IMR-90 (cell line): ENCODE measurements at regions of chr9 and their contacts with region 1.

Region 1: GRCh38 chr9:125407974-125408900 is 146.6 kb downstream of the GAPVD1 start:
- DNase-seq: peak; percentile 56
- ATAC-seq: peak; percentile 93
- H3K4me3 ChIP-seq: peak overlapping the region; percentile 82
- H3K27ac ChIP-seq: peak overlapping the region; percentile 69
- H3K4me1 ChIP-seq: peaks cover 3% of the 10 kb centered on the region; the same call in 1 of the 2 replicates
- H3K27me3 ChIP-seq: no peaks in the 10 kb centered on the region
- CTCF ChIP-seq: peak; percentile 95
- POLR2A ChIP-seq: 0 out of 2 replicates have a peak, but pooled peaks have one; percentile 51
- RAD21 ChIP-seq: peak; percentile 96

Region 2: GRCh38 chr9:125513668-125514413 is 105.6 kb after region 1 on chr9:
- CTCF ChIA-PET with region 1: no interaction called
- POLR2A ChIA-PET with region 1: no interaction called
- dilution Hi-C with region 1: no loop called
- in situ Hi-C with region 1: no loop called
- intact Hi-C with region 1: no loop called
- DNase-seq: peak; percentile 81
- ATAC-seq: peak; percentile 85
- H3K4me3 ChIP-seq: peak overlapping the region; percentile 19; the same call in 1 of the 2 replicates
- H3K27ac ChIP-seq: peak overlapping the region; percentile 68
- H3K4me1 ChIP-seq: peaks cover 18% of the 10 kb centered on the region
- H3K27me3 ChIP-seq: no peaks in the 10 kb centered on the region
- CTCF ChIP-seq: no peak
- POLR2A ChIP-seq: no peak
- RAD21 ChIP-seq: no peak

Region 3: DNA sequence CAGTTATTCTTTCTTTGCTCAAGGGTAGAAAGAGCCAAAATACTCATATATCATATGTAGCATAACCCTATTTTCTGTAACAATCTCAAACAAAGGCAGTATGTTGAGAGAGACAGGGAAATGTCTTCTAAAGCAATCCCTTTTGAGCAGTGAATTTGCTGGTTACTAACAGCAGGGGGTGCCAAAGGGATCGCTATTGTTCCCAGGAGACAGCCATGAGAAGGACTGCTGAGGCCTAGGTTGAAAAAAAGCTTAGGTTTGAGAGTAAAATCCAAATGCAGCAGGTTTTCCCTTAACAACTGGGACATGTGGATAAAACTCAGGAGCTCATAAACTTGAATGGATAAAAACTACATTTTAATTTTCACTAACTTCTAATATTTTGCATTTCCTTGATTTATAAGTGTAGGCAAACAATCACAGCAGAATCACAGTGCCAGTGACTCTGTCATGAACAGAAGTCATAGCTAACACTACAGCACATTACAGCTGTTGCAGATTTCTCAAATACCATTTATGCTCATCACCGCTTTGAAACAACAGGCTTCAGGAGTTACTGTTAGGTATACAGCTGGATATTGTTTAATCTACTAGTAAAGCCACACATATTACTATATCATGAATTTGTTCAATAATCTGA is 150.3 kb after region 1 on chr9:
- CTCF ChIA-PET with region 1: interaction called, 3 read pairs
- POLR2A ChIA-PET with region 1: no interaction called
- dilution Hi-C with region 1: no loop called
- in situ Hi-C with region 1: no loop called
- intact Hi-C with region 1: loop called (anchors 2 kb)
- DNase-seq: peak; percentile 83
- ATAC-seq: peak; percentile 88
- H3K4me3 ChIP-seq: no peak overlapping the region
- H3K27ac ChIP-seq: no peak overlapping the region; the same call in 1 of the 2 replicates
- H3K4me1 ChIP-seq: peaks cover 3% of the 10 kb centered on the region
- H3K27me3 ChIP-seq: no peaks in the 10 kb centered on the region
- CTCF ChIP-seq: peak; percentile 77
- POLR2A ChIP-seq: no peak
- RAD21 ChIP-seq: peak; percentile 85

Region 4: GRCh38 chr9:125631391-125632085 is 223.3 kb after region 1 on chr9:
- CTCF ChIA-PET with region 1: interaction called, 3 read pairs
- POLR2A ChIA-PET with region 1: no interaction called
- dilution Hi-C with region 1: no loop called
- in situ Hi-C with region 1: loop called (anchors 10 kb)
- intact Hi-C with region 1: loop called (anchors 1 kb)
- DNase-seq: peak; percentile 57
- ATAC-seq: peak; percentile 85
- H3K4me3 ChIP-seq: no peak overlapping the region
- H3K27ac ChIP-seq: no peak overlapping the region
- H3K4me1 ChIP-seq: peaks cover 7% of the 10 kb centered on the region
- H3K27me3 ChIP-seq: no peaks in the 10 kb centered on the region
- CTCF ChIP-seq: peak; percentile 64
- POLR2A ChIP-seq: no peak
- RAD21 ChIP-seq: peak; percentile 80

Region 5: GRCh38 chr9:125706661-125707471 is 298.6 kb after region 1 on chr9 and contains the start of gene MAPKAP1:
- CTCF ChIA-PET with region 1: no interaction called
- POLR2A ChIA-PET with region 1: no interaction called
- dilution Hi-C with region 1: no loop called
- in situ Hi-C with region 1: no loop called
- intact Hi-C with region 1: loop called (anchors 5 kb)
- DNase-seq: peak; percentile 95
- ATAC-seq: peak; percentile 99
- H3K4me3 ChIP-seq: peak within 1 kb of the TSS; percentile 67
- H3K27ac ChIP-seq: peak within 1 kb of the TSS; percentile 88
- H3K4me1 ChIP-seq: peaks cover 5% of the 10 kb centered on the region
- H3K27me3 ChIP-seq: no peaks in the 10 kb centered on the region
- CTCF ChIP-seq: no peak
- POLR2A ChIP-seq: peak; percentile 84
- RAD21 ChIP-seq: peak; percentile 26; the same call in 1 of the 2 replicates
- total RNA-seq, gene MAPKAP1: 122 and 158 TPM in 2 replicates

Region 6: GRCh38 chr9:126228781-126229444 is 820.7 kb after region 1 on chr9:
- CTCF ChIA-PET with region 1: no interaction called
- POLR2A ChIA-PET with region 1: no interaction called
- dilution Hi-C with region 1: no loop called
- in situ Hi-C with region 1: loop called (anchors 5 kb)
- intact Hi-C with region 1: loop called (anchors 1 kb)
- DNase-seq: peak; percentile 57
- ATAC-seq: peak; percentile 100
- H3K4me3 ChIP-seq: no peak overlapping the region
- H3K27ac ChIP-seq: no peak overlapping the region
- H3K4me1 ChIP-seq: no peaks in the 10 kb centered on the region
- H3K27me3 ChIP-seq: peaks cover 58% of the 10 kb centered on the region
- CTCF ChIP-seq: peak; percentile 88
- POLR2A ChIP-seq: no peak
- RAD21 ChIP-seq: peak; percentile 91

Region 7: GRCh38 chr9:126398403-126399058 is 990.3 kb after region 1 on chr9:
- CTCF ChIA-PET with region 1: interaction called, 6 read pairs
- POLR2A ChIA-PET with region 1: no interaction called
- dilution Hi-C with region 1: no loop called
- in situ Hi-C with region 1: loop called (anchors 10 kb)
- intact Hi-C with region 1: loop called (anchors 5 kb)
- DNase-seq: peak; percentile 52
- ATAC-seq: peak; percentile 91
- H3K4me3 ChIP-seq: no peak overlapping the region
- H3K27ac ChIP-seq: no peak overlapping the region
- H3K4me1 ChIP-seq: peaks cover 8% of the 10 kb centered on the region
- H3K27me3 ChIP-seq: no peaks in the 10 kb centered on the region
- CTCF ChIP-seq: peak; percentile 97
- POLR2A ChIP-seq: no peak
- RAD21 ChIP-seq: peak; percentile 97

Region 8: DNA sequence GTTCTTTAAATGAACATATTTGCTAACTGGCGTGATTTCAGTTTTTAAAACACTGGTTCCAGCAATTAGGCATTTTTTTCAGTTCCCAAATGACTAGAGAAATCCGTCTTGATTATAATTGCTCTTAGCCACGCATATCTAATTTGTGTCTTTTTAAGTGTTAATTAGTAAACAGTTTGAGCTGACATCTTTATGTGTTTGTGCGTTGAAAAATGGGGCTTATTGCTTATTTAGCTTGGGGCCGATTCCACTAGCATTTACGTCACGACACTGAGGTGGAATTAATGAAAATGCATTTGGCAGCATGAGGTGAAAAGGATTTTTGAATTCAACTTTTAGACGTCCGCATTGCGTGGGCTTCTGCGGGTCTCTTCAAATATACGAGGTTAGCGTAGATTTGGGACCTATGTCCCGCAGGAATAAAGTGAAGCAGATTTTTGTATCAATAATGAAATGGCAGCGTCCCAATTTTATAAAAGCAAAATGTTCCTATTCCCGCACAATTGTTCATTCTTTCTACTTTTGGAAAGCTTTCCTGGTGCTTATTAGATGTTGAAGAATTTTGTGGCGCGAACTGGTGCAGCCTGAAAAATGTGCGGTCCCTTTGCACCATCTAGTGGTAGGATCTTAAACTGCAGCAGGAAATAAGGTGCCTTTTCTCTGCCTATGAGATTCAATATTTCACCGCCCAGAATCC is 1082.8 kb after region 1 on chr9:
- CTCF ChIA-PET with region 1: no interaction called
- POLR2A ChIA-PET with region 1: no interaction called
- dilution Hi-C with region 1: no loop called
- in situ Hi-C with region 1: loop called (anchors 25 kb)
- intact Hi-C with region 1: loop called (anchors 10 kb)
- DNase-seq: peak; percentile 69
- ATAC-seq: peak; percentile 91
- H3K4me3 ChIP-seq: no peak overlapping the region
- H3K27ac ChIP-seq: no peak overlapping the region
- H3K4me1 ChIP-seq: no peaks in the 10 kb centered on the region
- H3K27me3 ChIP-seq: no peaks in the 10 kb centered on the region
- CTCF ChIP-seq: peak; percentile 92
- POLR2A ChIP-seq: 0 out of 2 replicates have a peak, but pooled peaks have one; percentile 34
- RAD21 ChIP-seq: peak; percentile 95